ENCODE measurements at regions of chr22 and their contacts with region 1.

Region 1: GRCh38 chr22:31451709-31452571 is 37.7 kb downstream of the EIF4ENIF1 start:
- DNase-seq: peak; percentile 46 to 70 (median 67)
- H3K4me3 ChIP-seq: no peak overlapping the region
- H3K27ac ChIP-seq: no peak overlapping the region
- H3K4me1 ChIP-seq: peaks cover 0 to 4% (median 1%) of the 10 kb centered on the region in 4 experiments
- H3K27me3 ChIP-seq: no peaks in the 10 kb centered on the region

Region 2: DNA sequence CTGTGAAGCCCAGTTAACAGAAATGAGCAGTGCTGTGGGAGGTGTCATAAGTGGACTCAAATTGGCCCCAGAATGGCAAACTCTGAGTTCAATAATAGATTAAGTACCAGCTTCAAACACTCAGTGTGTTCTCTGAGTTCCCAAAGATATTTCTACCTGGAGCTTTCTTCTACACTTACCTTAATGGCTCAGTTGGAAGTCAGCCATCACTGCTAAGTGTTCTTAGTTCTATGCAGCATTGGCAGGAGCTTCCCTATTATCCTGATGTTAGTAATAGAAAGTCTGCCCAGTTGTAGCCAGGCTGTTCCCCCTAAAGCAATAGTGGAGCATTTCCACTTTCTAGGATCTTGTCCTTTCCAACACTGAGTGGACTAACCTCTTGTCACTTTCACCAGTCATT is 149.9 kb before region 1 on chr22:
- CTCF ChIA-PET with region 1: no interaction called
- POLR2A ChIA-PET with region 1: no interaction called
- DNase-seq: no peak
- H3K4me3 ChIP-seq: no peak overlapping the region
- H3K27ac ChIP-seq: no peak overlapping the region
- H3K4me1 ChIP-seq: no peaks in the 10 kb centered on the region
- H3K27me3 ChIP-seq: no peaks in the 10 kb centered on the region

Region 3: DNA sequence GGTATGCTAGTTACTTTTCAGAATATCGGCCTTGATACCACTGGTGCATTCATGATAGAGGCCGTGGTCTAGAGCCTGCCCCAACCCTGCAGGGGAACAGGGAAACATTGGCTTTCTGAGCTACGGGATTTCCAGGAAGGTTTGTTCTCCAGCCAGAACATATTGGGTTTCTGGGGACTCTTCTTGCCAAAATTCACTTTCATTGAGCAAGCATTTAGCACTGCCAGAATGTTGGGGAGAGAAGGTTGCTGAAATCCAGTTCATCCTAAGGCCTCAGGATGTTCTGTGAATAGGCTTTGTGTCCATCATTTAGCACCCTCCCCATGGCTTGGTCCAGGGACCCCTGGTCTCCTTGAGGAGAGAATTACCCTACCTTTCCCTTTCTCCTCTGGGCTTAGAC is 15.8 kb before region 1 on chr22:
- CTCF ChIA-PET with region 1: interaction called, 13 read pairs
- POLR2A ChIA-PET with region 1: no interaction called
- DNase-seq: no peak
- H3K4me3 ChIP-seq: no peak overlapping the region
- H3K27ac ChIP-seq: no peak overlapping the region
- H3K4me1 ChIP-seq: no peaks in the 10 kb centered on the region
- H3K27me3 ChIP-seq: no peaks in the 10 kb centered on the region